Mammary epithelial cell (primary cell): ENCODE measurements at regions of chr3 and their contacts with region 1.

Region 1: DNA sequence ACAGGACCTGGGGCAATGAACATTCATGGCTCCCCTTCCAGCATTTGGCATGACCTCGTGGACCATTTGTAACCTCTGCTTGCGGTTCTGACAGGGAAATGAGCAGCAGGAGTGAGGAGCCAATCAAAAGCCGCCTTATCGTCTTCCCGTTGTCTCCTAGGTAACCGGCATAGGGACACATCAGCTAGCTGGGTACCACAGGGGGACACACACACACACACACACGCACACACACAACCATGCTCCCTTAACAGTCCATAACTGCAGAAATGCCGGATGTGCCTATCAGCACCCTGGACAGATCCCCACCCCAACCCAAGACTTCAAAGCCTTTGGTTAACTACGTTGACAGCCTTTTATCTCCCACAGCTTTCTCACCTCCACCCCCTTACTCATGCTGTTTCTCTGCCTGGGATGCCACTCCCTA is 53.4 kb upstream of the CCDC174 start:
- DNase-seq: peak; percentile 19
- H3K4me3 ChIP-seq: no peak overlapping the region
- H3K27ac ChIP-seq: no peak overlapping the region
- H3K4me1 ChIP-seq: peaks cover 7% of the 10 kb centered on the region
- H3K27me3 ChIP-seq: peaks cover 11% of the 10 kb centered on the region
- CTCF ChIP-seq: no peak

Region 2: DNA sequence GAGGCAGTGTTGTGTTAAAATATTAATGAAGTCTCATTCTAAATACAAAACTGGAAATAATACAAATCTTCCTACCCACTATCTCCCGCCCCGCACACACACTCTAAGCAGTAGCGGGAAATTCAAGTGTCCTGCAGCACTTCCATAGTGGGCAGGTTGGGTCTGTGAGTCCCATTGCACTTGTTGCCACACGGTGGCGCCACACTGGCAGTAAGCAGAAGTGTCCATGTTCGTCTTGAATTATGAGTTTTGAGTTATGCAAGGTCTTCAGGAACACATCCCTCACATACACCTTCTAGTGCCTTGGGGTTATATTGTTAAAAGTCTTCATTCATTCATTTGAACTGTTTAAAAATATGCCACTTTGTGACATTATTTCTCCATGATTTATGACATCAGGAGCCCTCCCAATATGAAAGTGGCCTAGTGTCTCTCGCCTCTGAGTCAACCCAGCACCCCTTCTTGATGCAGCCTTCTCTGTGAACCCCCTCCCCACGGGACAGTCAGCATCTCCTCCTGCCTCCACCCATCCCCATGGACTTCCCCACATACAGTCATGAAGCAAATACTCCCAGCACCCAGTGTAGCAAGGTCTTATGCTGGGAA is 35.8 kb after region 1 on chr3:
- CTCF ChIA-PET with region 1: interaction called, 20 read pairs
- dilution Hi-C with region 1: no loop called
- in situ Hi-C with region 1: no loop called
- intact Hi-C with region 1: no loop called
- DNase-seq: peak; percentile 41
- H3K4me3 ChIP-seq: no peak overlapping the region
- H3K27ac ChIP-seq: no peak overlapping the region
- H3K4me1 ChIP-seq: peaks cover 4% of the 10 kb centered on the region
- H3K27me3 ChIP-seq: no peaks in the 10 kb centered on the region
- CTCF ChIP-seq: peak; percentile 72 to 82

Region 3: DNA sequence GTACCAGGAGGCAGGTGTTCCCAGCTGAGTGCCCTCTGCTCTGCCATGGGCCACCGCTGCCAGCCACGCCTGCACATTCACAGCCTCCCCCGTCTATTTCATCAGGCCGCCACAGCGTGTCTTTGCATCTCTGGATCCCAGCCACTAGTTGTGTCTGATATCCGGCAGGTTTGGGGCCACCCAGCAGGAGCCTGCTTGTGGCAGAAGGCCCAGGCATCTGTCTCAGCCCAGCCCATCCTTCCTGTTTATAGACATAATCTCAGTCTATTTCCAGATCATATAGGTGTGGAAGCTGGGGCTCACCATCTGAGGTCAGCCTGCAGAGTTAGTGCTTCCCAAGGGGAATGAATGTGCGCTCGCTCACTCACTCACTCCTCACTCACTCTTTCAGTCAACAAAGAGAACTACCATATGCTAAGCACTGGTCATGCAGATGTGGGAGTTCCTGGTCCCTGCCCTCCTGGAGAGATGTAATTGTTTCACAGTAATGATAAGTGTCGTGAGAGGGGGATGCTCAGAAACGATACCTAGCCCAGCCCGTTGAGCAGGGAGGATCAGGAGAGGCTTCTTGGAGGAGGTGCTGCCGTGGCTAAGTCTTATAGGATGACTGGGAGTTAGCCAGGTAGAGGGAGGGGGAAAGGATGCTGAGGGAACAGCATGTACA is 281.2 kb after region 1 on chr3:
- CTCF ChIA-PET with region 1: no interaction called
- dilution Hi-C with region 1: no loop called
- in situ Hi-C with region 1: no loop called
- intact Hi-C with region 1: no loop called
- DNase-seq: no peak
- H3K4me3 ChIP-seq: no peak overlapping the region
- H3K27ac ChIP-seq: no peak overlapping the region
- H3K4me1 ChIP-seq: no peaks in the 10 kb centered on the region
- H3K27me3 ChIP-seq: peaks cover 3% of the 10 kb centered on the region
- CTCF ChIP-seq: no peak